ENCODE measurements at regions of chr10 and their contacts with region 1.

Region 1: GRCh38 chr10:18179891-18180290 is 39.7 kb downstream of the CACNB2 start:
- DNase-seq: peak in 1 of 2 donors; percentile 74
- H3K4me3 ChIP-seq: peak overlapping the region; percentile 35 to 41
- H3K27ac ChIP-seq: peak overlapping the region; percentile 43 to 65
- H3K4me1 ChIP-seq: peaks cover 4 to 21% of the 10 kb centered on the region in 2 donors
- H3K27me3 ChIP-seq: no peaks in the 10 kb centered on the region
- CTCF ChIP-seq: no peak

Region 2: DNA sequence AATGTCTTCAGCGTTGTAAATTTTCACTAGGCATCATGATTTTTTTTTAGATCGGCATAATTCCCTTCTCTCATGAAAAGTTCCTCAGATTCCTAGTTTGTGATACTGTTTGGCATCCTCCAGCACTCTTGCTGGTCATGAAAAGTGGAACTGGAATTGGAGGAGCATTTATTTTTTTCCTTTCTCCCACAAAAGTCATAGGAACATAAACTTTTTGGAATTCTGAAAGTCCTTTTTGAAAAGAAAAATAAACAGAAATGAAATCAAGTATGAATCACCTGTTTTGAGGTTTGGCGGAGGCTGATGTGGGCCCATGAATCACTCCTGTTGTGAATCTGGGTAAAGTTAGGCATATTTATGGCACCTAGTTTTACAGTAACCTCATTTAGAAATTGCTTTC is 22.0 kb before region 1 on chr10:
- intact Hi-C with region 1: loop called (anchors 2 kb)
- DNase-seq: no peak
- H3K4me3 ChIP-seq: peak overlapping the region; percentile 14 to 31
- H3K27ac ChIP-seq: peak overlapping the region; percentile 33 to 72
- H3K4me1 ChIP-seq: peaks cover 2 to 22% of the 10 kb centered on the region in 2 donors
- H3K27me3 ChIP-seq: no peaks in the 10 kb centered on the region
- CTCF ChIP-seq: no peak

Region 3: DNA sequence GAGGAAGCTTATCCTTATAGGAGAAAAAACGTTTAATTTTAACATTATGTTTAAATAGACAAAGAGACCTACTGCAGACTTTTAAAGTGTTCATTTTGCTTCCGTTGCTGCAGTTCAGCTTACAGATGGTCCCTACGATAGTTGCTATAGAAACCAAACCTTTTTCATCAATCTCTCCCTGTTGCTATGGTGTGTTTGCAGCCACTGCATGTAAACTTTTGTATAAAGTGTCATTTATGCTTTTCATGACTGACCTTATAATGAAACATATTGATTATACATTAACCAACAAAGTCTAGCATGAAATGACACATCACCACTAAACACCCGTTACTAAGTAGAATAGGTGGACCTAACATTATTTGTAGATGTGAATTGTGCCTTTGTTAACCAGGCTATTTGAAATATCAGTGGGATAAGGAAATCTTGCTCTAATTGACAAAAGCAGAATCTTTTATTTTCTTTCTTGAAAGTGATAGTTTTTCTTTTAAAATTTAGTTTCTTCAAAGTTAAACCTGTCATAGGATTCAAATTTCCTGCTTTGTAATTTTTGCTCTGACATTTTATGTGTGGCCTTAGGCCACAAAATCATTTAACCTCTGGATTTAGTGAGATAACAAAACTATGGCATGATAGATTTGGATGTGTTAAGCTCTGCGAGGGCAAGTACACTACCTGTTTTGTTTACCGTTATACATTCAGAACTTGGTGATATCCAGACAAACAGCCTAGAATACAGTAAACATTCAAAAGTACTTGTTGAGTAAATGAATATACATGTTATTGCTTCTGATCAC is 24.3 kb after region 1 on chr10:
- intact Hi-C with region 1: no loop called
- DNase-seq: no peak
- H3K4me3 ChIP-seq: no peak overlapping the region
- H3K27ac ChIP-seq: no peak overlapping the region
- H3K4me1 ChIP-seq: peaks cover 0 to 5% of the 10 kb centered on the region in 2 donors
- H3K27me3 ChIP-seq: no peaks in the 10 kb centered on the region
- CTCF ChIP-seq: no peak

Region 4: GRCh38 chr10:18240185-18240882 is 60.4 kb after region 1 on chr10:
- intact Hi-C with region 1: no loop called
- DNase-seq: no peak
- H3K4me3 ChIP-seq: peak overlapping the region; percentile 31 to 41
- H3K27ac ChIP-seq: peak overlapping the region; percentile 34 to 66
- H3K4me1 ChIP-seq: peaks cover 0 to 21% of the 10 kb centered on the region in 2 donors
- H3K27me3 ChIP-seq: no peaks in the 10 kb centered on the region
- CTCF ChIP-seq: no peak

Measured in ascending aorta (tissue), 2 donors.